ENCODE measurements at regions of chr1 and their contacts with region 1.

Region 1: GRCh38 chr1:44036409-44037139 is 5.3 kb upstream of the SLC6A9 start:
- DNase-seq: peak; percentile 33 to 77 (median 67)
- ATAC-seq: peak; percentile 93
- H3K4me3 ChIP-seq: no peak overlapping the region
- H3K4me3 Mint-ChIP-seq: no peak overlapping the region
- H3K27ac ChIP-seq: no peak overlapping the region
- H3K27ac Mint-ChIP-seq: no peak overlapping the region
- H3K4me1 ChIP-seq: no peaks in the 10 kb centered on the region
- H3K4me1 Mint-ChIP-seq: peaks cover 3% of the 10 kb centered on the region
- H3K27me3 ChIP-seq: no peaks in the 10 kb centered on the region
- H3K27me3 Mint-ChIP-seq: no peaks in the 10 kb centered on the region
- CTCF ChIP-seq: peak; percentile 84

Region 2: GRCh38 chr1:43763497-43763973 is 273.0 kb before region 1 on chr1:
- CTCF ChIA-PET with region 1: interaction called, 31 read pairs
- POLR2A ChIA-PET with region 1: no interaction called
- intact Hi-C with region 1: loop called in 1 of 2 experiments (anchors 1 kb)
- DNase-seq: peak in 8 of 9 experiments; percentile 3 to 72 (median 41)
- ATAC-seq: peak; percentile 81
- H3K4me3 ChIP-seq: no peak overlapping the region
- H3K4me3 Mint-ChIP-seq: no peak overlapping the region
- H3K27ac ChIP-seq: no peak overlapping the region
- H3K27ac Mint-ChIP-seq: no peak overlapping the region
- H3K4me1 ChIP-seq: no peaks in the 10 kb centered on the region
- H3K4me1 Mint-ChIP-seq: peaks cover 4% of the 10 kb centered on the region
- H3K27me3 ChIP-seq: no peaks in the 10 kb centered on the region
- H3K27me3 Mint-ChIP-seq: no peaks in the 10 kb centered on the region
- CTCF ChIP-seq: peak; percentile 75

Region 3: GRCh38 chr1:44002606-44003157 is 33.9 kb before region 1 on chr1:
- CTCF ChIA-PET with region 1: interaction called, 337 read pairs
- POLR2A ChIA-PET with region 1: interaction called, 3 read pairs
- intact Hi-C with region 1: loop called (anchors 1 kb)
- DNase-seq: no peak
- ATAC-seq: no peak
- H3K4me3 ChIP-seq: no peak overlapping the region
- H3K4me3 Mint-ChIP-seq: no peak overlapping the region
- H3K27ac ChIP-seq: no peak overlapping the region
- H3K27ac Mint-ChIP-seq: no peak overlapping the region
- H3K4me1 ChIP-seq: no peaks in the 10 kb centered on the region
- H3K4me1 Mint-ChIP-seq: no peaks in the 10 kb centered on the region
- H3K27me3 ChIP-seq: no peaks in the 10 kb centered on the region
- H3K27me3 Mint-ChIP-seq: no peaks in the 10 kb centered on the region
- CTCF ChIP-seq: no peak

Region 4: GRCh38 chr1:44021581-44022321 is 14.8 kb before region 1 on chr1:
- CTCF ChIA-PET with region 1: interaction called, 20 read pairs
- POLR2A ChIA-PET with region 1: no interaction called
- intact Hi-C with region 1: no loop called
- DNase-seq: no peak
- ATAC-seq: no peak
- H3K4me3 ChIP-seq: no peak overlapping the region
- H3K4me3 Mint-ChIP-seq: no peak overlapping the region
- H3K27ac ChIP-seq: no peak overlapping the region
- H3K27ac Mint-ChIP-seq: no peak overlapping the region
- H3K4me1 ChIP-seq: no peaks in the 10 kb centered on the region
- H3K4me1 Mint-ChIP-seq: no peaks in the 10 kb centered on the region
- H3K27me3 ChIP-seq: no peaks in the 10 kb centered on the region
- H3K27me3 Mint-ChIP-seq: no peaks in the 10 kb centered on the region
- CTCF ChIP-seq: no peak

Measured in CD8-positive, alpha-beta T cell (primary cell).